ENCODE measurements at regions of chr5 and their contacts with region 1.

Region 1: GRCh38 chr5:157253547-157253946 is 12.4 kb upstream of the CYFIP2 start:
- DNase-seq: peak; percentile 29
- H3K4me3 ChIP-seq: no peak overlapping the region
- H3K27ac ChIP-seq: no peak overlapping the region
- H3K4me1 ChIP-seq: no peaks in the 10 kb centered on the region
- H3K27me3 ChIP-seq: no peaks in the 10 kb centered on the region
- CTCF ChIP-seq: peak; percentile 85 to 94

Region 2: GRCh38 chr5:155616779-155617392 is 1636.7 kb before region 1 on chr5:
- CTCF ChIA-PET with region 1: no interaction called
- dilution Hi-C with region 1: no loop called
- in situ Hi-C with region 1: no loop called
- intact Hi-C with region 1: loop called (anchors 5 kb)
- DNase-seq: peak; percentile 14
- H3K4me3 ChIP-seq: no peak overlapping the region
- H3K27ac ChIP-seq: no peak overlapping the region
- H3K4me1 ChIP-seq: no peaks in the 10 kb centered on the region
- H3K27me3 ChIP-seq: no peaks in the 10 kb centered on the region
- CTCF ChIP-seq: peak; percentile 74 to 81

Region 3: GRCh38 chr5:156963125-156963524 is 290.4 kb before region 1 on chr5 and contains the start of gene TIMD4:
- CTCF ChIA-PET with region 1: no interaction called
- dilution Hi-C with region 1: no loop called
- in situ Hi-C with region 1: no loop called
- intact Hi-C with region 1: no loop called
- DNase-seq: no peak
- H3K4me3 ChIP-seq: no peak within 1 kb of the TSS
- H3K27ac ChIP-seq: no peak within 1 kb of the TSS
- H3K4me1 ChIP-seq: no peaks in the 10 kb centered on the region
- H3K27me3 ChIP-seq: no peaks in the 10 kb centered on the region
- CTCF ChIP-seq: no peak
- total RNA-seq, gene TIMD4: not detected

Region 4: DNA sequence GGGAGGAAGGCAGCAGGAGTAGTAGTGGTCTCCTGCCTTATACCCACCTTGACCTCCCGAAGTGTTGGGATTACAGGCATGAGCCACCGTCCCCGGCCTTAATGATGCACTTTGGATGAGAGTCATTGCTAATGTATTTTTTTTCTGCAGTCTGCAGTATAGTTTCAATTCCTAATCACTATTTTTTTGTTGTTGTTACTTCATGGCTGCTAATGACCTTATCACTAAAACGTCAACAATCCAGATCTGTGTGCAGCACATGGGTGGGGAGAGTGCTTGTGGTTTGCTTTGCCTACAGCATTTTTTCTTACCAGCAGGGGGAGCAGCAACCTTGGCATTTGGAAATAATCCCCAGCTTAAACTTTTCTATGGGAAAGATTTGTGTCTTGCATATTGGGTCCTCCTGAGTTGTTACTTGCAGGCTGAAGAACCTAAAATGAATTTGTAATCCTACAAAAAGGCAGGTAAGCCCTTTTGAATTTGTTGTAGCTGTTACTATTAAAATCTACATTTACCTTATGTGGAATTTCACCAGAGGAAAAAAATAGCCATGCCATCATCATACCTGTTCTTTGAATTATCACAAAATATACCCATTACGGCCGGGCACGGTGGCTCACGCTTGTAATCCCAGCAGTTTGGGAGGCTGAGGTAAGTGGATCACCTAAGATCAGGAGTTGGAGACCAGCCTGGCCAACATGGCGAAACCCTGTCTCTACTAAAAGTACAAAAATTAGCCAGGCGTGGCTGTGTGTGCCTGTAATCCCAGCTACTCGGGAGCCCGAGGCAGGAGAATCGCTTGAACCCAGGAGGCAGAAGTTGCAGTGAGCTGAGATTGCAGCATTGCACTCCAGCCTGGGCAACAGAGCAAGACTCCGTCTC is 104.6 kb before region 1 on chr5:
- CTCF ChIA-PET with region 1: interaction called, 3 read pairs
- dilution Hi-C with region 1: no loop called
- in situ Hi-C with region 1: no loop called
- intact Hi-C with region 1: loop called (anchors 5 kb)
- DNase-seq: peak; percentile 46
- H3K4me3 ChIP-seq: no peak overlapping the region
- H3K27ac ChIP-seq: no peak overlapping the region
- H3K4me1 ChIP-seq: no peaks in the 10 kb centered on the region
- H3K27me3 ChIP-seq: no peaks in the 10 kb centered on the region
- CTCF ChIP-seq: peak; percentile 90 to 94